ENCODE measurements at regions of chr16 and their contacts with region 1.

Region 1: DNA sequence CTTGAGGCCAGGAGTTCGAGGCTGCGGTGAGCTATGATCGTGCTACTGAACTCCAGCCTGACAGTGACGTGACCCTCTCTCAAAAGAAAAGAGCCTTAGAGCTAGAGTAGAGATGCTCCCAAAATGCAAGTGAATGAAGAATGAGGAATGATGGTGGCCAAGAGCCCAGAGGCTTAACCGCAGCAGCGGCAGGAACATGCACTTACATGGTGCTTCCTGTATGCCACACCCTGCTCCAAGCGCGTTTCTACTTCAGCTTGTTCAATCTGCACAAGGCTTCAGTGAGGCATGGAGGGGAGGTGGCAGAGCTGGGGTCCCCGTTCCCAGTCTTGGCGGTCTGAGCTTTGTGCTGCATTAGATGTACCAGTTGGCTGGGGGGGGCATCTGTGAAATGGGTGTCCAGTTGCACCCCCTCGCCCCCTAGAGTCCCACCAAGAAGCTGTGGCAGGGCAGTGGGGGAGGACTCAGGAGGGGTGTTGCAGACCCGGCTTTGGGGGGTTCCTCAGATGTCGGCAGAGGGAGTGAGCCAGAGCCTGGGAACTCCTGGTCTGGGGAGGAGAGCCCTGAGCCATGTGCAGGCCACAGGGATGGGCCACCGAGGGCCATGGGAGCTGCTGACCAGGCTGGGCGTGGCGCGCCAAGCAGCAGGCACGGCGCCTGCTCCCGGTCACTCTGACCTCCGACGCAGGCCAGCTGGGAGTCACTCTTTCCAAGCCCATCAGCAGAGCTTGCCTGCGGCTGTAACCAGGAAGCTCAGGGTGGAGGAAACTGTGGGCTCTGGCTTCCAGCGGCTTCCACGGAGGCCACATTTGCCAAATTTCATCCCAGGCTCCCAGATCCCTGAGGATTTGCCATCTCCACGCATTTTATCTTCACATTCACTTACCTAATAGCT is 260.1 kb downstream of the PARN start:
- DNase-seq: no peak
- H3K4me3 ChIP-seq: no peak overlapping the region
- H3K27ac ChIP-seq: no peak overlapping the region
- H3K4me1 ChIP-seq: no peaks in the 10 kb centered on the region
- H3K27me3 ChIP-seq: no peaks in the 10 kb centered on the region
- CTCF ChIP-seq: no peak
- POLR2A ChIP-seq: no peak

Region 2: GRCh38 chr16:14028202-14028601 is 341.8 kb before region 1 on chr16:
- intact Hi-C with region 1: loop called in 1 of 2 experiments (anchors 5 kb)
- DNase-seq: peak in 1 of 7 donors; percentile 35
- H3K4me3 ChIP-seq: no peak overlapping the region
- H3K27ac ChIP-seq: no peak overlapping the region
- H3K4me1 ChIP-seq: peaks cover 0 to 4% of the 10 kb centered on the region in 2 donors
- H3K27me3 ChIP-seq: no peaks in the 10 kb centered on the region
- CTCF ChIP-seq: no peak
- POLR2A ChIP-seq: no peak

Measured in adrenal gland (tissue), 19 donors.